Activated CD4-positive, alpha-beta T cell treated with anti-CD3 and anti-CD28 coated beads for 36 hours (primary cell): ENCODE measurements at regions of chr2 and their contacts with region 1.

Region 1: GRCh38 chr2:101419096-101419663 is 31.9 kb upstream of the CREG2 start:
- DNase-seq: peak; percentile 75
- ATAC-seq: peak; percentile 84
- H3K4me3 Mint-ChIP-seq: no peak overlapping the region
- H3K27ac Mint-ChIP-seq: no peak overlapping the region
- H3K4me1 Mint-ChIP-seq: no peaks in the 10 kb centered on the region
- H3K27me3 Mint-ChIP-seq: no peaks in the 10 kb centered on the region

Region 2: DNA sequence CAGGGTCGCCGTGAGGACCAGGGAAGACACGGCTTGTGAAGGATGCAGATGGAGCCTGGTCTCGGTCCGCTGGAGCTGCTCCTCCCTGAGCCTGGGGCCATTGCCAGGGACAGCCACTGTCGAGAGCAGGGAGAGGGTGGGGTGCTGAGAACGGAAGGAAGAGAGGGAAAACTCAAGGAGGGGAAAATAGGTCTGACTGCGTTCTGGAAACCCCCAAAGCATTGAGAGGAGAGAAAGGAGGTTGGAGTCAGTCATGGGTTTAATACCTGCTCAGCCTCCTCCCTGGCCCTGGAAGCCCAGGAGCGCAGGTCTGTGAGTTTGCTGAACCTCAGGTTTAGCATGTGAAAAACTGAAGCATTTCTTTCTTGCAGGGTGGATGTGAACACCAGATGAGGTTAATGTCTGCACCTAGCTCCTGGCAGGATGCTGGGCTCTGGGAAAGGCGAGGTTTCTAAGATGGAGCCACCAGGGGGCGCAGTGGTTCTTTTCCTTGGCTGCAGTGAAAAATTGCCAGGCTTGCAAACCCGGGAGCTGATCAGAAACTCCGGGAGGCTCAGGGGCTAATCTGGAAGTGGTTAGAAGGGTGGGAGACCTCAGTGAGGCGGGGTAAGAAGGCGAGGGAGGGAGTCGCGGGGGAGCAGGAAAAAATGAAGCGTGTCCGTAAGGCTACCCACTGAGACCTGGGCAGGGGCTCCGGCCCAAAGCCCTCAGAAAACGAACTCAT is 77.1 kb before region 1 on chr2:
- CTCF ChIA-PET with region 1: interaction called, 7 read pairs
- POLR2A ChIA-PET with region 1: no interaction called
- intact Hi-C with region 1: loop called in 1 of 2 experiments (anchors 1 kb)
- DNase-seq: peak; percentile 85
- ATAC-seq: peak; percentile 74
- H3K4me3 Mint-ChIP-seq: no peak overlapping the region
- H3K27ac Mint-ChIP-seq: no peak overlapping the region
- H3K4me1 Mint-ChIP-seq: peaks cover 18% of the 10 kb centered on the region
- H3K27me3 Mint-ChIP-seq: no peaks in the 10 kb centered on the region

Region 3: DNA sequence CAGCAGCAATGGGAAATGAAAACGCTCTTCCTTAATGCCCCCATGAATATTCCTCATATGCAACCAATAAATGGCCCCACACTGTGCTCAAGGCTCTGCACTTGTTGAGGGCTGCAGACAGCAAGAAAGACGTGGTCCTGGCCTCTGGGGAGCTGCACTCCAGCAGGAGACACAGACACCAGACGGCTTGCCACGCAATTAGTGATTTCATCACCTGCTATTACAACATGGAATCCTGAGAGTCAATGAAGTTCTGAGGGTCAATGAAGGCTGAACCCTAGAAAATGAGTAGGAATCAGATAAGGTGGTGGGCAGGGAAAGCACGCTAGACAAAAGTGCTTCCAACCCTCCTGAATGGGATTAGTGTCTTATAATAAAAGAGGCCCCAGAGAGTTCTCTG is 50.8 kb before region 1 on chr2:
- CTCF ChIA-PET with region 1: no interaction called
- POLR2A ChIA-PET with region 1: no interaction called
- intact Hi-C with region 1: no loop called
- DNase-seq: no peak
- ATAC-seq: no peak
- H3K4me3 Mint-ChIP-seq: no peak overlapping the region
- H3K27ac Mint-ChIP-seq: no peak overlapping the region
- H3K4me1 Mint-ChIP-seq: no peaks in the 10 kb centered on the region
- H3K27me3 Mint-ChIP-seq: no peaks in the 10 kb centered on the region

Region 4: GRCh38 chr2:101823347-101823791 is 404.2 kb after region 1 on chr2:
- CTCF ChIA-PET with region 1: interaction called, 11 read pairs
- POLR2A ChIA-PET with region 1: no interaction called
- intact Hi-C with region 1: no loop called
- DNase-seq: peak; percentile 83
- ATAC-seq: peak; percentile 79
- H3K4me3 Mint-ChIP-seq: peak overlapping the region; percentile 20
- H3K27ac Mint-ChIP-seq: peak overlapping the region; percentile 83
- H3K4me1 Mint-ChIP-seq: peaks cover 73% of the 10 kb centered on the region
- H3K27me3 Mint-ChIP-seq: no peaks in the 10 kb centered on the region

Region 5: DNA sequence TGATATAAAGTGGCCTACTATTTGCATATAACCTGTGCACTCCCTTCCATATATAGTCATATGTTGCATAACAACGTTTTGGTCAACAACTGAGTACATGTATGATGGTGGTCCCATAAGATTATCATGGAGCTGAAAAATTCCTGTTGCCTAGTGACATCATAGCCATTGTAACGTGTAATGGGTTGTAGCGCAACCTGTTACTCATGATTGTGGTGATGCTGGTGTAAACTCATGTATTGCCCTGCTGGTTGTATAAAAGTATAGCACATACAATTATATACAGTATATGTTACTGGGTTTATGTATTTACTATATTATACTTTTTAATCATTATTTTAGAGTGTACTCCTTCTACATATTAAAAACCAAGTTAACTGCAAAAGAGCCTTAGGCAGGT is 427.8 kb after region 1 on chr2:
- CTCF ChIA-PET with region 1: interaction called, 6 read pairs
- POLR2A ChIA-PET with region 1: no interaction called
- intact Hi-C with region 1: loop called in 1 of 2 experiments (anchors 5 kb)
- DNase-seq: no peak
- ATAC-seq: peak; percentile 58
- H3K4me3 Mint-ChIP-seq: no peak overlapping the region
- H3K27ac Mint-ChIP-seq: no peak overlapping the region
- H3K4me1 Mint-ChIP-seq: peaks cover 21% of the 10 kb centered on the region
- H3K27me3 Mint-ChIP-seq: no peaks in the 10 kb centered on the region

Region 6: DNA sequence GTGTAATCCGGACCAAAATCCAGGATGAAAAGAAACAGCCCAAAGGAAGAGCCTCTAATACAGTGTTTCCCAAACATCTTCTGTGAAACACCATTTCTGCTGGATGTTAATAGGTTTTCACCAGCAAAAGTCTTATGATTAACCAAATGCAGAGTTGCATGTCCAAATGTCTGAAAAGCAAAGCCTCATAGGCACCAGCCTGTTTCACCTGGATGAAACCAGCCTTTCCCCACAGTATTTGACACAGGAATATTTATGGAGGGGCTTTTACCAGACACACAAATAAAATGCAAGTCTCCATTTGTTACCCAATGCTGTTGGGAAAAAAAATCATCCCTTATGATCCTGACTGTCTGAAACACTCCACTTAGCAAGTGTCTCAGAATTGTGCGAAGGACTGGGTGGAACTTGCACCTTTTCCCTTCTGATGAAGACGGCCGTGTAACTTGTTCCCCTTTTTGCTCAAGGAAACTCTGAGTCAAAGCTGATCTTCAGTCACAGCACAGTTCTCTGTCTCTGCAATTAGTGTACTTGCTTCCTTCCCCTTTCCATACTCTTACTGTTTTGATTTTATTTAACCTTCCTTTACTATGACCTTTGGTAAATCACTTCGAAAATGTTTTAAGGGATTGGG is 502.3 kb after region 1 on chr2:
- CTCF ChIA-PET with region 1: no interaction called
- POLR2A ChIA-PET with region 1: no interaction called
- intact Hi-C with region 1: no loop called
- DNase-seq: peak; percentile 15
- ATAC-seq: peak; percentile 47
- H3K4me3 Mint-ChIP-seq: no peak overlapping the region
- H3K27ac Mint-ChIP-seq: peak overlapping the region; percentile 63
- H3K4me1 Mint-ChIP-seq: peaks cover 2% of the 10 kb centered on the region
- H3K27me3 Mint-ChIP-seq: peaks cover 5% of the 10 kb centered on the region

Region 7: GRCh38 chr2:102449370-102449974 is 1030.3 kb after region 1 on chr2:
- CTCF ChIA-PET with region 1: no interaction called
- POLR2A ChIA-PET with region 1: no interaction called
- intact Hi-C with region 1: loop called in 1 of 2 experiments (anchors 2 kb)
- DNase-seq: peak; percentile 85
- ATAC-seq: peak; percentile 58
- H3K4me3 Mint-ChIP-seq: no peak overlapping the region
- H3K27ac Mint-ChIP-seq: no peak overlapping the region
- H3K4me1 Mint-ChIP-seq: peaks cover 6% of the 10 kb centered on the region
- H3K27me3 Mint-ChIP-seq: no peaks in the 10 kb centered on the region